HAP-1 (cell line): ENCODE measurements at regions of chr2 and their contacts with region 1.

Region 1: GRCh38 chr2:240655931-240656886 is 26.5 kb downstream of the AQP12B start:
- DNase-seq: no peak
- H3K4me3 ChIP-seq: no peak overlapping the region
- H3K4me1 ChIP-seq: no peaks in the 10 kb centered on the region
- H3K27me3 ChIP-seq: peaks cover 40% of the 10 kb centered on the region

Region 2: GRCh38 chr2:240611601-240612210 is 44.5 kb before region 1 on chr2:
- in situ Hi-C with region 1: no loop called
- DNase-seq: no peak
- H3K4me3 ChIP-seq: no peak overlapping the region
- H3K4me1 ChIP-seq: no peaks in the 10 kb centered on the region
- H3K27me3 ChIP-seq: no peaks in the 10 kb centered on the region

Region 3: DNA sequence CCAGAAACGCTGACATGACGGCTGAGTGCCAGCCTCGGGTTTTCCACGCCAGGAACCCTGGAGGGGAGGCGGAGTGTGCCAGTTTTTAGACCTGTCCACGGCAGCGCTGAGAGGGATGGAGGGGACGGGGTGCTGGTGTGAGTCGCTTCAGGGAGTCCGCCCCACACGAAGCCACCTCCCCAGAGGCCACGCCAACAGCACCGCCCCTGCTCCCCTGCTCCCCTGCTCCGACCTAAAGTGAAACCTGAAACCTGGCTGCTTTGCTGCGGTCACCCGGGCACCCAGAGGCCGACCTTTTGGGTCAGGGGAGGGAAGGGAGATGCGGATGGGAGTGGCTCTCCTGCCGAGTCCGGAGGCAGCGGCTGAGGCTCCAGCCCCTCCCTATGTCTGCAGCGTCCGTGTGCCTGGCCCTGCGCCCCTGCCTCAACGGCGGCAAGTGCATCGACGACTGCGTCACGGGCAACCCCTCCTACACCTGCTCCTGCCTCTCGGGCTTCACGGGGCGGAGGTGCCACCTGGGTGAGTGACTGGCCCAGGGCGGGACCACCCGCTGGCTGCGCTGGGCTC is 380.3 kb after region 1 on chr2:
- in situ Hi-C with region 1: loop called (anchors 25 kb)
- DNase-seq: no peak
- H3K4me3 ChIP-seq: no peak overlapping the region
- H3K4me1 ChIP-seq: no peaks in the 10 kb centered on the region
- H3K27me3 ChIP-seq: no peaks in the 10 kb centered on the region; the same call in 1 of the 2 replicates